Panc1 (cell line): ENCODE measurements at regions of chr2 and their contacts with region 1.

Region 1: DNA sequence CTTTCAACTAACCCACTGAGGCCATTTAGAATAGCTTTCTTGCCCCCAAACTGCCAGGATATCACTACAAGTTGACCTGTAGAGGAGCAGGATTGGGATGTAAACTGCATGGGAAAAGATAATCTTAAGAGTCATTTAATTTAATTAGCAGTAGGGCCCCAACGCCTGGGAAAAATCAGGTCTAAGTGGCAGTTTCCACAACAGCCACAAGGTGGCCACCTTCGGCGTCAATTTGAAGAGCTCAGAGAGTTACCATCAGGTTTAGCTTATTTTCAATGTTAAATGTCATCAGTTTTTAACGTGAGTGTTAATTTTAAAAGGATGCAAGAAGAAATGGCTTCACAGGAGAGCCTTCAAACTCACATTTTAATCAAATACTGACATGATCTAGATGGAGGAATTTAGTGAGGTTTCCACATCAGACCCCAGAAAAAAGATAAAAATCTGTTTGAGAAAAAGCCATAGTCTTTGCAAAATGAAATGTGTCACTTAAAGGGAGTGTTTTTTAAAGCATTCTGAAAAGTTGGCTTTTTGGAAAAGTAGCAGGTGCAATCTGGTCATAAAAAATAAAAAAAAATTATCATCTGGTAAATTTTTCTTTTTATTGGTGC is 77.3 kb upstream of the UPP2 start:
- DNase-seq: no peak
- ATAC-seq: peak; percentile 84
- H3K4me3 ChIP-seq: no peak overlapping the region
- H3K27ac ChIP-seq: no peak overlapping the region
- H3K4me1 ChIP-seq: no peaks in the 10 kb centered on the region
- H3K27me3 ChIP-seq: 0 out of 2 replicates have a peak, but pooled peaks cover 2% of the 10 kb centered on the region
- CTCF ChIP-seq: peak; percentile 89

Region 2: DNA sequence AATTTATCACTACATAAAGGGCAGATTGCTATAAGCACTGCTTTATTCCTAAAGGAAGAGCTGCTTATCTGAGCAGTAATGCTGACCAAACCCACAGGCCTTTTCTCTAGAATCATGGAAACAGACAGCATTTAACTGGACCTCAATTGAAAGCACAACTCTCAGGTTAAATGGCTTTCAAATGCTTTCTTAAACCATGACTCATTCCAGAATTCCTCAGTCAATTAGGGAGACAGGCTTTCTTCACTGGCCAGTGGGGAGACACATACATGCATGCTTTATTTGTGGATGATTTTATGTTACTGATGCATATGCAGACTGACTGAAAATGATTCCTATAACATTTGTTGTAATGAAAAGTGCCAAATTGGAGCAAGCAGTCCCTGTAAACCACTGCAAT is 262.9 kb before region 1 on chr2:
- CTCF ChIA-PET with region 1: no interaction called
- POLR2A ChIA-PET with region 1: no interaction called
- in situ Hi-C with region 1: no loop called
- intact Hi-C with region 1: no loop called
- DNase-seq: no peak
- ATAC-seq: no peak
- H3K4me3 ChIP-seq: no peak overlapping the region
- H3K27ac ChIP-seq: no peak overlapping the region
- H3K4me1 ChIP-seq: no peaks in the 10 kb centered on the region
- H3K27me3 ChIP-seq: no peaks in the 10 kb centered on the region
- CTCF ChIP-seq: no peak

Region 3: GRCh38 chr2:158745044-158745865 is 720.9 kb after region 1 on chr2:
- CTCF ChIA-PET with region 1: interaction called, 9 read pairs
- POLR2A ChIA-PET with region 1: no interaction called
- in situ Hi-C with region 1: no loop called
- intact Hi-C with region 1: loop called (anchors 5 kb)
- DNase-seq: no peak
- ATAC-seq: peak; percentile 83
- H3K4me3 ChIP-seq: no peak overlapping the region
- H3K27ac ChIP-seq: no peak overlapping the region
- H3K4me1 ChIP-seq: no peaks in the 10 kb centered on the region; the same call in none of the 2 replicates
- H3K27me3 ChIP-seq: peaks cover 20% of the 10 kb centered on the region
- CTCF ChIP-seq: peak; percentile 79